HCT116 (cell line): ENCODE measurements at regions of chr17 and their contacts with region 1.

Region 1: DNA sequence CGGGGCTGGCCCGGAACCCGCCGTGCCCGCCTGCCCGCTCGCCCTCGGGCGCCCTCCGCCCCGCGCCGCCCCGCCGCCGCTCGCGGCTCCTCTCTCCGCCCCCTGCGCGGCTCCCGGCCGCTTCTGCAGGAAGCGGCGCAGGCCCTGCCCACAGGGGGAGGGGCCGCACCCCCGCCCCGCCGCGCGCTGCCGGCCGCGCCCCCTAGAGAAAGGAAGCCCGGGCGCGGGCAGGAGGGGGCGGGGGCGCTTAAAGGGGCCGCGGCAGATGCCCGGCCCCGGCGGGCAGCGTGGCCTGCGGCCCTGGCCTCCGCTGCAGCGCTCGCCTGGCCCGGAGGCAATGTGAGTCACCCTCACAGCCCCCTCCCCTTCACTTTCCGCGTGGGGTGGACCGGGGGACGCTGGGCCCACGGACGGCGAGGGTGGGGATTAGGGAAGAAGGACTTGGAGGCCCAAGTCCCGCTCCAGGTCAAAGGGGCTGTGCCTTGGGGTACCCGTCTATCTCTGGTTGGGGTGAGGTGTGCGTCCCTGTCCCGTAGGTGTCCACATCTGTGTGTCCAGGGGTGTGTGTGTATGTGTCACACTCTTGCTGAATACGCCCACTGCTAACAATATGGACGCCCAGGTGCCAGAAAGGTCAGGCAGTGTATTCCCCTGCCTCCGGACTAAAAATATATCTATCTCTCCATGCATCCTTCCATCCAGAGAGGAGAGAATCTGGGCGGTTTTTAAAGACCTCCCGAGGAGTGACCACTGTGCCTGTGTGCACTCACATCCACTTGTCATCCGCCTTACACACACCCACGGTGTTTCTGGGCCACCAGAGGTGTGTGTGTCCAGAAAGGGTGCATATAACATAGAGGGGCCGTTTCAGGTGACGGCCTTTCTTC is at the start of gene GIT1:
- DNase-seq: peak; percentile 59
- ATAC-seq: peak; percentile 55
- H3K4me3 ChIP-seq: peak within 1 kb of the TSS; percentile 86 to 96
- H3K27ac ChIP-seq: peak within 1 kb of the TSS; percentile 94
- H3K4me1 ChIP-seq: peaks cover 32 to 73% of the 10 kb centered on the region in 2 experiments
- H3K27me3 ChIP-seq: no peaks in the 10 kb centered on the region
- CTCF ChIP-seq: no peak
- POLR2A ChIP-seq: peak; percentile 23
- RAD21 ChIP-seq: no peak
- total RNA-seq, gene GIT1: 76.5 TPM

Region 2: GRCh38 chr17:29568331-29569244 is 21.2 kb before region 1 on chr17 and contains the start of gene TP53I13:
- CTCF ChIA-PET with region 1: interaction called, 26 read pairs
- POLR2A ChIA-PET with region 1: interaction called, 3 read pairs
- RAD21 ChIA-PET with region 1: interaction called in 1 of 2 experiments, 3 read pairs
- intact Hi-C with region 1: no loop called
- DNase-seq: peak; percentile 22
- ATAC-seq: peak; percentile 52
- H3K4me3 ChIP-seq: peak within 1 kb of the TSS; percentile 79 to 82
- H3K27ac ChIP-seq: peak within 1 kb of the TSS; percentile 82
- H3K4me1 ChIP-seq: peaks cover 13 to 25% of the 10 kb centered on the region in 2 experiments
- H3K27me3 ChIP-seq: no peaks in the 10 kb centered on the region
- CTCF ChIP-seq: no peak
- POLR2A ChIP-seq: peak; percentile 47
- RAD21 ChIP-seq: no peak
- total RNA-seq, gene TP53I13: 33.3 TPM

Region 3: DNA sequence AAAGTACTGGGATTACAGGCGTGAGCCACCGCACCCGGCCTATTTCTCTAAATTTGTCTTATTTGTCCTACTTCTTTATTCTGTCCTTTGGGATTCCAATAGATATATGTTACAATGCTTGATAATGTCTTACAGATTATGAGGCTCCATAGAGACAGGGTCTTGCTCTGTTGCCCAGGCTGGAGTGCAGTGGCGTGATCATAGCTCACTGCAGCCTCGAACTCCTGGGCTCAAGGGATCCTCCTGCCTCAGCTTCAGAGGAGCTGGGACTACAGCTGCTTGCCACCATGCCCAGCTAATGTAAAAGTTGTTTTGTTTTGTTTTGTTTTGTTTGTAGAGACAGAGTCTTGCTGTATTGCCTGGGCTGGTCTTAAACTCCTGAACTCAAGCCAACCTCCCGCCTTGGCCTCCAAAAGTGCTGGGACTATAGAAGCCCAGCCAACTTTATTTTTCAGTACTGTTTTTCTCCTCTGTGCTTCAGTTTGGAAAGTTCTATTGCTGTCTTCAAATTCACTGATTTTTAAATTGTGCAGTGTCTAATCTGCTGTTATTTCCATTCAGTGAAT is 13.4 kb after region 1 on chr17:
- CTCF ChIA-PET with region 1: no interaction called
- POLR2A ChIA-PET with region 1: no interaction called
- RAD21 ChIA-PET with region 1: no interaction called
- intact Hi-C with region 1: no loop called
- DNase-seq: no peak
- ATAC-seq: no peak
- H3K4me3 ChIP-seq: no peak overlapping the region
- H3K27ac ChIP-seq: no peak overlapping the region
- H3K4me1 ChIP-seq: no peaks in the 10 kb centered on the region
- H3K27me3 ChIP-seq: no peaks in the 10 kb centered on the region
- CTCF ChIP-seq: no peak
- POLR2A ChIP-seq: no peak
- RAD21 ChIP-seq: no peak